ENCODE measurements at regions of chr9 and their contacts with region 1.

Region 1: GRCh38 chr9:113581865-113582697 is 118.6 kb downstream of the RGS3 start:
- DNase-seq: peak; percentile 87
- H3K4me3 ChIP-seq: peak overlapping the region in 1 of 4 donors; percentile 26
- H3K27ac ChIP-seq: peak overlapping the region; percentile 75 to 85 (median 80)
- H3K4me1 ChIP-seq: peaks cover 34 to 55% (median 45%) of the 10 kb centered on the region in 4 donors
- H3K27me3 ChIP-seq: no peaks in the 10 kb centered on the region
- CTCF ChIP-seq: peak in 4 of 5 experiments; percentile 16 to 48 (median 26)
- EP300 ChIP-seq: no peak
- POLR2A ChIP-seq: no peak

Region 2: DNA sequence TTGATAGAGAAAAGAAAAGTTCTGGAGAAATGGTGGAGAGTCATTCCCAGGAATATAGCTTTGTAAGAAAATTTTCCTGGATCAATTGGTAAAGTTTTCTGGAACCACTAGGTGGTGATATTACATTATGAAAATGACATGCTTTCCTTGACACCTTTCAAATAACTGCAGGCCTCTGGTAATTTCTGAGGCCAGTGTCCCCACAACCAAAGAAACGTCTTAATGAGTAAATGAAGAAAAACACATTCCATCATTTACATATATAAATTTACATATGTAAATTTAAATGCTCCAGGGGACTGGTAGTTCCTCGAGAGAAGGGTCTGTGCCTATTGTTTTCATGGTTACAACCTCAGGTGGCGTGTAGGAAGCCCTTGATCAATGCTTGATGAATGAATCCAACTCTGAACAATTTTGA is 135.7 kb before region 1 on chr9:
- in situ Hi-C with region 1: loop called in 3 of 4 experiments (anchors 5 to 10 kb)
- intact Hi-C with region 1: no loop called
- DNase-seq: no peak
- H3K4me3 ChIP-seq: no peak overlapping the region
- H3K27ac ChIP-seq: peak overlapping the region in 1 of 4 donors; percentile 3
- H3K4me1 ChIP-seq: peaks cover 0 to 3% (median 0%) of the 10 kb centered on the region in 4 donors
- H3K27me3 ChIP-seq: no peaks in the 10 kb centered on the region
- CTCF ChIP-seq: peak; percentile 59 to 79 (median 73)
- EP300 ChIP-seq: no peak
- POLR2A ChIP-seq: no peak

Region 3: DNA sequence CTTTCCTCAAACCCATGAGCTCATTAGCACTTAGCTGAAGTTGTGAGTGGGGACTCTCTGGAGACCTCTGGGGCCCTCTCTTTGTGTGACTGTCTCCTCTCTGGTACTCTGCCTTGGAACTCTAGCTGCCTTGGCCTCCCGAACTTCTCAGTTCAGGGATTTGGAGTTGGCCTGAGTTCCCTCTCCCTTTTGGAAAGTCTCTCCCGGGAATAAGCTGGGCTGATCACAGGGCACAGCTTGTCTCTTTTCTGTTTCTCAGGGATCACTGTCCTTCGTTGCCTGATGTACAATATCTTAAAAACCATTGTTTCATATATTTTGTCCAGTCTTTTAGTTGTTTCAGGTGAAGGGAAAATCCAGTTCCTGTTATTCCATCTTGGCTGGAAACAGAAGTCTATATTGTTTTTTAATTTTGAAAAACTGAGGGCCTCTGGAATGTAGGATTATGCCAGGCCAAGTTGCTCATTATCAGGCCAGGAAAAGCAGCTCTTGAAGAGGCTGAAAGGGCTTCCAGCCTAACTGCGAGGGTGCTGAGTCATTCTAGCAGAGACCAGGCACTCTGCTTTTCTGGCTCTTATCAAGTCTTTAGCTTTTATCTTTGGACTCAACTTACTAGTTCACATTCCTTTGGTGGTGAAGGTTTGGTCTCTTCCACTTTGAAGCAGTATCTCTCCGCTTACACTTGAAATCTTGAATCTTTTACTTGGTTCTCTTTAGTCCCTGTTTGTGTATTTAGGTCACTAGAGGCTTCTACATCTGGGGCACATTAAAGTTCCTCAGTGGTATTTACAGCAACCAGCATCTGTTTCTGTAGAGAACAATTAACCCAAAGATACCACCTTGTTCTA is 126.9 kb before region 1 on chr9:
- in situ Hi-C with region 1: loop called in 1 of 4 experiments (anchors 10 kb)
- intact Hi-C with region 1: no loop called
- DNase-seq: no peak
- H3K4me3 ChIP-seq: no peak overlapping the region
- H3K27ac ChIP-seq: peak overlapping the region; percentile 71 to 87 (median 80)
- H3K4me1 ChIP-seq: peaks cover 7 to 22% (median 13%) of the 10 kb centered on the region in 4 donors
- H3K27me3 ChIP-seq: no peaks in the 10 kb centered on the region
- CTCF ChIP-seq: no peak
- EP300 ChIP-seq: no peak
- POLR2A ChIP-seq: no peak

Region 4: GRCh38 chr9:113648586-113649453 is 66.7 kb after region 1 on chr9:
- in situ Hi-C with region 1: no loop called
- intact Hi-C with region 1: loop called (anchors 2 kb)
- DNase-seq: peak; percentile 34
- H3K4me3 ChIP-seq: no peak overlapping the region
- H3K27ac ChIP-seq: peak overlapping the region in 3 of 4 donors; percentile 39 to 52 (median 47)
- H3K4me1 ChIP-seq: peaks cover 0 to 4% (median 0%) of the 10 kb centered on the region in 4 donors
- H3K27me3 ChIP-seq: no peaks in the 10 kb centered on the region
- CTCF ChIP-seq: no peak
- EP300 ChIP-seq: no peak
- POLR2A ChIP-seq: no peak

Measured in transverse colon (tissue), 4 donors.